ENCODE measurements at regions of chr19 and their contacts with region 1.

Region 1: GRCh38 chr19:2475702-2476450 is at the start of gene GADD45B:
- DNase-seq: peak; percentile 97 to 99 (median 98)
- ATAC-seq: peak; percentile 76 to 82 (median 80)
- H3K4me3 ChIP-seq: peak within 1 kb of the TSS; percentile 89 to 96 (median 94)
- H3K27ac ChIP-seq: peak within 1 kb of the TSS; percentile 74 to 89 (median 82)
- H3K4me1 ChIP-seq: peaks cover 0 to 3% (median 0%) of the 10 kb centered on the region in 3 donors
- H3K27me3 ChIP-seq: no peaks in the 10 kb centered on the region
- CTCF ChIP-seq: no peak
- total RNA-seq, gene GADD45B: 20.4 to 58.8 (median 42.3) TPM

Region 2: GRCh38 chr19:2253106-2254053 is 222.5 kb before region 1 on chr19:
- intact Hi-C with region 1: no loop called
- DNase-seq: peak in 2 of 6 donors; percentile 58 to 69
- ATAC-seq: no peak
- H3K4me3 ChIP-seq: no peak overlapping the region
- H3K27ac ChIP-seq: no peak overlapping the region
- H3K4me1 ChIP-seq: no peaks in the 10 kb centered on the region
- H3K27me3 ChIP-seq: peaks cover 0 to 6% (median 0%) of the 10 kb centered on the region in 4 donors
- CTCF ChIP-seq: no peak

Region 3: GRCh38 chr19:2543463-2544442 is 67.9 kb after region 1 on chr19:
- intact Hi-C with region 1: loop called in 1 of 3 experiments (anchors 5 kb)
- DNase-seq: peak; percentile 92 to 98 (median 94)
- ATAC-seq: peak; percentile 92 to 95 (median 94)
- H3K4me3 ChIP-seq: peak overlapping the region in 1 of 4 donors; percentile 17
- H3K27ac ChIP-seq: peak overlapping the region; percentile 64 to 87 (median 84)
- H3K4me1 ChIP-seq: peaks cover 9 to 22% (median 20%) of the 10 kb centered on the region in 3 donors
- H3K27me3 ChIP-seq: no peaks in the 10 kb centered on the region
- CTCF ChIP-seq: no peak

Region 4: GRCh38 chr19:2588081-2588777 is 112.4 kb after region 1 on chr19:
- intact Hi-C with region 1: loop called in 1 of 3 experiments (anchors 10 kb)
- DNase-seq: peak; percentile 87 to 94 (median 91)
- ATAC-seq: peak; percentile 85 to 87 (median 86)
- H3K4me3 ChIP-seq: peak overlapping the region in 1 of 4 donors; percentile 2
- H3K27ac ChIP-seq: peak overlapping the region; percentile 73 to 86 (median 84)
- H3K4me1 ChIP-seq: peaks cover 12 to 35% (median 21%) of the 10 kb centered on the region in 3 donors
- H3K27me3 ChIP-seq: no peaks in the 10 kb centered on the region
- CTCF ChIP-seq: no peak

Region 5: DNA sequence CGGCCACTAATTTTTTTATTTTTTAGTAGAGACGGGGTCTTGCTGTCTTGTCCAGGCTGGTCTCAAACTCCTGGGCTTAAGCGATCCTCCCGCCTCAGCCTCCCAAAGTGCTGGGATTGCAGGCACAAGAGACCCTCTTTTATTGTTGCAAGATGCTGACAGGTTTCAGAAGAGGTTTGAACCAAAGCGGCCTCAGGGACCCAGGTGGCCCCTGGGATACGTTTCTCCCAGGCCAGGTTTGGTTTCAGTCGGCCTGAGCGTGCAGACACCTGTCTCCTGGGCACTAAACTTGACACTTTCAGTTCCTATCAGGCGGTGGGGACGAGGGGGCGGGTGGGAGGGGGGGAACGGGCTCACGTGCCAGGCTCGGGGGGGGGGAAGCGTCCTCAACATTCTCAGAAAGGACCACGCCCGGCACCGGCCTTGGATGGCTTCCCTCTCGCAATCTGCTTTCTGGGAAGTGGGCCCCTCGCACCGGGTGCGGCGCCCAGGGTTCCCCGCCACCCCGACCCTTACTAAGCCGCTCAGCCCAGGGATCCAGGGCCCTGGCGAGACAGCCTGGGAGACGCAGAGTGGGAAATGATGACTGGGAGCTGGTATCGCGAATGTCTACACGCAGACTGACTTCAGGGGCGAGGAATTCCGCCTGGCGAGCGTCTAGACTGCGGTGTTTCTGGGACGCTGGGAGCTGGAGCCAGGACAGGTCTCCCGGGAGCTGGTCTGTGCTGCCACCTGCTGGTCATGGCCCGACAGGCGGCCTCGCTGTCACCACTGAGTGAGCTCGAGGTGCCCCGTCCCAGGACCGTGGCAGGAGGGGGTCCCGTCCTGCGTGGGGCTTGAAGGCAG is 135.0 kb after region 1 on chr19:
- intact Hi-C with region 1: loop called in 1 of 3 experiments (anchors 5 kb)
- DNase-seq: peak; percentile 91 to 100 (median 96)
- ATAC-seq: peak; percentile 91 to 95 (median 94)
- H3K4me3 ChIP-seq: peak overlapping the region in 3 of 4 donors; percentile 14 to 34 (median 33)
- H3K27ac ChIP-seq: peak overlapping the region; percentile 58 to 92 (median 86)
- H3K4me1 ChIP-seq: peaks cover 0 to 7% (median 4%) of the 10 kb centered on the region in 3 donors
- H3K27me3 ChIP-seq: no peaks in the 10 kb centered on the region
- CTCF ChIP-seq: peak; percentile 94 to 96 (median 96)

Measured in pancreas (tissue), 10 donors.